Prostate gland (tissue), 2 donors: ENCODE measurements at regions of chr9 and their contacts with region 1.

Region 1: DNA sequence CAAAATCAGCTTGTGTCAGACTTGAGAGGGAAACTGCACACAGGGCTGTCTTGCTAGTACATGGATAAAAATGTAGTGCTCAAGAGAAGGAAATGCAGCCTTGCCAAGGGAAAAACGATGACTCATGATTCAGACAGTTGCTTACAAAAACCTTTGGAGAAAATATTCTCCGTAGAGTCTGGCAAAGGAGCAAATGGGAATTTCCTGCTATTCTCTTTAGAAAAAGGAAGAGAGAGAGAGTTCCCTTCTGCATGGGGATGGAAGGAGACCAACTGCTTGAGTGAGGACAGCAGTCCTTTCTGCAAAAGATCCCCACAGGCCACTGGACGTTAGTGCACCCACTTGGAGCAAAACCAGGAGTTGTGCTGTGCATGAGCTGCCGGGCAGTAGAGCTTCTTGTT is 7.6 kb downstream of the IFNB1 start:
- DNase-seq: peak; percentile 33
- H3K4me3 ChIP-seq: no peak overlapping the region
- H3K27ac ChIP-seq: no peak overlapping the region
- H3K4me1 ChIP-seq: no peaks in the 10 kb centered on the region
- H3K27me3 ChIP-seq: no peaks in the 10 kb centered on the region
- CTCF ChIP-seq: peak in 1 of 4 experiments; percentile 20
- POLR2A ChIP-seq: no peak

Region 2: DNA sequence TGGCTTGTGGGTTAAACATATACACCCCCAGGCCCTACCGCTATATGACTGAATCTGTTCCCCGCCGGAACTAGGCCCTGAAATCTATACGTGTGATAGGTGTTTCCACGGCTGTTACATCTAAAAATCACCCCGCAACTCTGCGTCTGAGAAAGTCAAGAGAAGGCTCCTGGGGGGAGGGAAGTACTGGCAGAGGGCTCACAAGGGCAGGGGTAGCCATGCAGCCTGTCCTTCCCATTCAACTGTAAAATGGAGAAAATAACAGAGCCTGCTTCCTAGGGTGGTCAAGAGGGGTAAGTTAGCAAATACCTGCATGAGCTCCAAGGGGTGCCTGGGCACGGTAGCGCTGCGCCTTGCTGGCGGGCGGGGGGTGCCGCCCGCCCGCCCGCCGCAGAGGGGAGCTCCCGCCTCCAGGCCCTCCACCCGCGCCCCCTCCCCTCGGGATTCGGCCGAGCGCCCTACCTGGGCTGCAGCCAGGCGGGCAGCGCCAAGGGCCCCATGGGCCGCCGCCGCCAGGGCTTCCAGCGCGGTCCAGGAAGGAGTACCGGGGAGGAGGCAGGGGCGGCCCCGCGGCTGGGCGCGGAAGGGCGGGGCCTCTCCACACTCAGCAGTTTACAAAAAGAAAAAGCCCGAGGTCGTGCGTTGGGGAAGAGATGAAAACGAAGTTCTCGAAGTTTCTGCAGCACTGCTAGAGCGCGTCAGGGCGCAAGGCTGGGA is 38.9 kb before region 1 on chr9 and contains the start of gene HACD4:
- intact Hi-C with region 1: loop called (anchors 5 kb)
- DNase-seq: peak; percentile 31
- H3K4me3 ChIP-seq: peak within 1 kb of the TSS; percentile 44 to 49
- H3K27ac ChIP-seq: peak within 1 kb of the TSS; percentile 66 to 72
- H3K4me1 ChIP-seq: no peaks in the 10 kb centered on the region
- H3K27me3 ChIP-seq: no peaks in the 10 kb centered on the region
- CTCF ChIP-seq: no peak
- POLR2A ChIP-seq: no peak
- total RNA-seq, gene HACD4: 2.4 to 3.1 TPM